Activated B cell treated with CpG ODN at 0.5 μM for 24 hours (primary cell): ENCODE measurements at regions of chr16 and their contacts with region 1.

Region 1: DNA sequence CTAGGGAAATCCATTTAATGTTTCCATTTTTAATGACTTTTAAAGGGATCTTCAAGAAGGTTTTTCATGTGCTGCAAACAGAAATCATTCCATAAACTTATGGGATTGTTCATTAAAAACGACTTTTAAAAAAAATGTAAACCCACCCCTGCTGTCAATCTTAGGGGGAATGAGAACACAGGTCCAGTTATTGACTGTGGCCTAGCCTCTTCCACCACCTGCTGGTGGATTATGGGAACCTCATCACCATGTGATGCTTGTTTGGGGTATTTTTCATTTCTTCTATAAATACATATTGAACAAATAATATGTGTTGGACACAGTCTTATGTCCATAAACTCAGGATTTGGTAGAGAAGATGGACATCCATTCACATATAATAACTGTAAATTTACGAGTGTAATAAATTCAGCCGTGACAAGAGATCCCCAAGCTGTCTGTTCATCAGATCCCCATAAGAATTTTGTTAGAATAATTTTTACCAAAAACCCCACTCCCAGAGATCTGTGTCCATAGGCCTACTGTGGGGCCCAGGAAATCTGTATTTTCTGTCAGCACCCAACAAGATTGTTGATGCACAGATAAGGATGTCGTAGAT is 42.0 kb upstream of the TMC5 start:
- DNase-seq: no peak
- ATAC-seq: peak; percentile 83
- H3K4me3 Mint-ChIP-seq: no peak overlapping the region
- H3K27ac Mint-ChIP-seq: no peak overlapping the region
- H3K4me1 Mint-ChIP-seq: no peaks in the 10 kb centered on the region
- H3K27me3 Mint-ChIP-seq: no peaks in the 10 kb centered on the region
- CTCF ChIP-seq: peak; percentile 97

Region 2: DNA sequence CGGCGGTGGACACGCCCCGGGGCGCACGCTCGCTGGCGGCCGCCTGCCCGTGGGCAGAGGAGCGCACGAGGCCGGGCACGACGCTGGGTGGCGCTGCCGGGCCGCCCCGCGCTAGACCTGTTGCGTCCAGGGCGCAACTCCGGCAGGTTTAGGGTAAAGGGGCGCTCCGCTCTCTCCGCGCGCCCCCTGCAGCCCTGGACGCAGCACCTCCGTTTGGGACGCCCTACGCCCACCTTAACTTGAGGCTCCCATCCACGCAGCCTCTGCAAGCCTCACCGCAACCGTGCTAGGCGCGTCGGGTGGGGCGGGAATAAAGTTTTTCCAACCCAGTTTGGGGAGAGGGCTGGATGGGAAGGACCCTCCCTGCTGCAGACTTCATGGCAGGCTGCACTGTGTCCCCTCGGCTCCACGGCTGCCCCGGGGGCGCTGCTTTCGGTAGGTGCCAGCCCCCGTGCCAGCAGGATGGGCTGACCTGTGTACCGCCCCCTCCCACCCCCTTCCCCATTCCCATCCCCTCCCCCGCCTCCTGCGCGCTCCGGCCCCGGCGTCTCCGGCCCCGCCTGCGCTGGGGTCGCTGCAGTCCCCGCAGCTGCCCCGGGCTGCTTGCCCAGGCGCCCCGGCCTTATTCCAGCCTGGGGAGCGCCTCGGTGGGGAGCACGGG is 207.8 kb before region 1 on chr16 and contains the start of gene SYT17:
- CTCF ChIA-PET with region 1: no interaction called
- POLR2A ChIA-PET with region 1: no interaction called
- intact Hi-C with region 1: loop called (anchors 1 kb)
- DNase-seq: peak; percentile 69
- ATAC-seq: peak; percentile 92
- H3K4me3 Mint-ChIP-seq: peak within 1 kb of the TSS; percentile 82
- H3K27ac Mint-ChIP-seq: no peak within 1 kb of the TSS
- H3K4me1 Mint-ChIP-seq: peaks cover 24% of the 10 kb centered on the region
- H3K27me3 Mint-ChIP-seq: no peaks in the 10 kb centered on the region
- CTCF ChIP-seq: no peak
- total RNA-seq, gene SYT17: 21.2 and 25.4 TPM in 2 replicates

Region 3: GRCh38 chr16:19184823-19185509 is 190.7 kb before region 1 on chr16:
- CTCF ChIA-PET with region 1: no interaction called
- POLR2A ChIA-PET with region 1: no interaction called
- intact Hi-C with region 1: no loop called
- DNase-seq: no peak
- ATAC-seq: no peak
- H3K4me3 Mint-ChIP-seq: no peak overlapping the region
- H3K27ac Mint-ChIP-seq: no peak overlapping the region
- H3K4me1 Mint-ChIP-seq: peaks cover 5% of the 10 kb centered on the region
- H3K27me3 Mint-ChIP-seq: no peaks in the 10 kb centered on the region
- CTCF ChIP-seq: no peak